Endothelial cell of umbilical vein (primary cell): ENCODE measurements at regions of chr11 and their contacts with region 1.

Region 1: GRCh38 chr11:92941676-92942571 is 27.5 kb upstream of the MTNR1B start:
- DNase-seq: peak; percentile 35
- H3K4me3 ChIP-seq: no peak overlapping the region
- H3K27ac ChIP-seq: no peak overlapping the region
- H3K4me1 ChIP-seq: no peaks in the 10 kb centered on the region
- H3K27me3 ChIP-seq: no peaks in the 10 kb centered on the region
- CTCF ChIP-seq: peak; percentile 58 to 61
- POLR2A ChIP-seq: no peak

Region 2: DNA sequence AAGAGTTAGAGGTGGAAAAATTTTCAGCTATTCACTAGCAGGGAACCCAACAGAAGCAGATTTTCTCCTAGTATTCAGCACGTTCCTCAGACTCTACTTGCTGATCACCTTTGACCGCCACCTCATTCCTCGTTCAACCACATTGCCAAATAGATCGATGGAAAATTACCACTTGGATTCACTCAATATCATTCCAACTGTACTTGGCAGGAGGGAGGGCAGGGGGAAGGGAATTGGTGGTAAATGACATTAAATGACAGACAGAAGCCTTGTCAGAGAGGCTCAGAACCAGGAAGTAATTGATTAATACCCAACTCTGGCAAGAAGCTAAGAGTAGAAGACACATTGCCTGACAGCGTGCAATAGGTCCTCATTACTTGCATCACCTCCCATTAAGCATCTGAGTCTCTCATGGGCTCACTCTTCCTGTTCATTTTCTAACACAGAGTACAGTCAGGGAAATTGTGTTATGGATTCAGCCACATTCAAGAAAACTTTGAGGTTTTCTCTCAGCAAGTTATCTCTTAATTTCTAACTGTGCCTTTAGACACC is 957.8 kb before region 1 on chr11:
- CTCF ChIA-PET with region 1: no interaction called
- POLR2A ChIA-PET with region 1: no interaction called
- dilution Hi-C with region 1: no loop called
- intact Hi-C with region 1: no loop called
- DNase-seq: no peak
- H3K4me3 ChIP-seq: no peak overlapping the region
- H3K27ac ChIP-seq: no peak overlapping the region
- H3K4me1 ChIP-seq: no peaks in the 10 kb centered on the region
- H3K27me3 ChIP-seq: no peaks in the 10 kb centered on the region
- CTCF ChIP-seq: no peak
- POLR2A ChIP-seq: no peak

Region 3: GRCh38 chr11:92804388-92804966 is 137.4 kb before region 1 on chr11:
- CTCF ChIA-PET with region 1: no interaction called
- POLR2A ChIA-PET with region 1: no interaction called
- dilution Hi-C with region 1: no loop called
- intact Hi-C with region 1: no loop called
- DNase-seq: no peak
- H3K4me3 ChIP-seq: no peak overlapping the region
- H3K27ac ChIP-seq: no peak overlapping the region
- H3K4me1 ChIP-seq: no peaks in the 10 kb centered on the region
- H3K27me3 ChIP-seq: no peaks in the 10 kb centered on the region
- CTCF ChIP-seq: no peak
- POLR2A ChIP-seq: no peak

Region 4: DNA sequence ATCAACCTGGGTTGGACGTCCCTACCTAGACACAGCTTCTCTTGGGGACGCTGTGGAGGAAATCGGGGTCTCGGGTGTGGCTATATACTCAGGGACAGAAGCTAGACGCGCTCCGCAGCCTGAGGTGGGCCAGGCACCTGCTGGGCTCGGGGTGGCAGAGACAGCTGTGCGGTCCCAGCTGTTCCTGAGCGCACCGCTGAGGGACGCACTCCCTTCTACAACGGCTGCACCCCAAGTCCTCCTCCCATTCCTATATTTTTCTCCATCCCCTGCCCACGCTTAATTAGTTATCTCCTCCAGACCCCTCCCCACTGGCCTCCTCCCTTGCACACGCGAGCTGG is 27.3 kb after region 1 on chr11:
- CTCF ChIA-PET with region 1: no interaction called
- POLR2A ChIA-PET with region 1: no interaction called
- dilution Hi-C with region 1: no loop called
- intact Hi-C with region 1: no loop called
- DNase-seq: no peak
- H3K4me3 ChIP-seq: no peak overlapping the region
- H3K27ac ChIP-seq: no peak overlapping the region
- H3K4me1 ChIP-seq: no peaks in the 10 kb centered on the region
- H3K27me3 ChIP-seq: peaks cover 0 to 4% of the 10 kb centered on the region in 2 experiments
- CTCF ChIP-seq: no peak
- POLR2A ChIP-seq: no peak

Region 5: GRCh38 chr11:93063100-93063499 is 121.2 kb after region 1 on chr11:
- CTCF ChIA-PET with region 1: interaction called, 28 read pairs
- POLR2A ChIA-PET with region 1: no interaction called
- dilution Hi-C with region 1: no loop called
- intact Hi-C with region 1: loop called (anchors 1 kb)
- DNase-seq: no peak
- H3K4me3 ChIP-seq: no peak overlapping the region
- H3K27ac ChIP-seq: no peak overlapping the region
- H3K4me1 ChIP-seq: no peaks in the 10 kb centered on the region
- H3K27me3 ChIP-seq: no peaks in the 10 kb centered on the region
- CTCF ChIP-seq: no peak
- POLR2A ChIP-seq: no peak

Region 6: GRCh38 chr11:93169950-93170561 is 228.1 kb after region 1 on chr11:
- CTCF ChIA-PET with region 1: interaction called, 7 read pairs
- POLR2A ChIA-PET with region 1: no interaction called
- dilution Hi-C with region 1: no loop called
- intact Hi-C with region 1: loop called (anchors 2 kb)
- DNase-seq: peak; percentile 40
- H3K4me3 ChIP-seq: no peak overlapping the region
- H3K27ac ChIP-seq: no peak overlapping the region
- H3K4me1 ChIP-seq: peaks cover 6% of the 10 kb centered on the region
- H3K27me3 ChIP-seq: no peaks in the 10 kb centered on the region
- CTCF ChIP-seq: peak in 1 of 2 donors; percentile 35
- POLR2A ChIP-seq: no peak

Region 7: GRCh38 chr11:93225662-93226061 is 283.7 kb after region 1 on chr11:
- CTCF ChIA-PET with region 1: interaction called, 136 read pairs
- POLR2A ChIA-PET with region 1: no interaction called
- dilution Hi-C with region 1: no loop called
- intact Hi-C with region 1: loop called (anchors 1 kb)
- DNase-seq: peak; percentile 41
- H3K4me3 ChIP-seq: no peak overlapping the region
- H3K27ac ChIP-seq: no peak overlapping the region
- H3K4me1 ChIP-seq: no peaks in the 10 kb centered on the region
- H3K27me3 ChIP-seq: no peaks in the 10 kb centered on the region
- CTCF ChIP-seq: no peak
- POLR2A ChIP-seq: no peak

Region 8: GRCh38 chr11:93234602-93235207 is 292.8 kb after region 1 on chr11:
- CTCF ChIA-PET with region 1: interaction called, 9 read pairs
- POLR2A ChIA-PET with region 1: no interaction called
- dilution Hi-C with region 1: no loop called
- intact Hi-C with region 1: loop called (anchors 1 kb)
- DNase-seq: peak; percentile 77
- H3K4me3 ChIP-seq: no peak overlapping the region
- H3K27ac ChIP-seq: no peak overlapping the region
- H3K4me1 ChIP-seq: no peaks in the 10 kb centered on the region
- H3K27me3 ChIP-seq: peaks cover 4 to 7% of the 10 kb centered on the region in 2 experiments
- CTCF ChIP-seq: peak; percentile 74 to 85
- POLR2A ChIP-seq: no peak

Region 9: GRCh38 chr11:93248602-93249001 is 306.7 kb after region 1 on chr11:
- CTCF ChIA-PET with region 1: interaction called, 13 read pairs
- POLR2A ChIA-PET with region 1: no interaction called
- dilution Hi-C with region 1: no loop called
- intact Hi-C with region 1: no loop called
- DNase-seq: peak; percentile 15
- H3K4me3 ChIP-seq: no peak overlapping the region
- H3K27ac ChIP-seq: no peak overlapping the region
- H3K4me1 ChIP-seq: no peaks in the 10 kb centered on the region
- H3K27me3 ChIP-seq: no peaks in the 10 kb centered on the region
- CTCF ChIP-seq: peak in 1 of 2 donors; percentile 5
- POLR2A ChIP-seq: no peak

Region 10: DNA sequence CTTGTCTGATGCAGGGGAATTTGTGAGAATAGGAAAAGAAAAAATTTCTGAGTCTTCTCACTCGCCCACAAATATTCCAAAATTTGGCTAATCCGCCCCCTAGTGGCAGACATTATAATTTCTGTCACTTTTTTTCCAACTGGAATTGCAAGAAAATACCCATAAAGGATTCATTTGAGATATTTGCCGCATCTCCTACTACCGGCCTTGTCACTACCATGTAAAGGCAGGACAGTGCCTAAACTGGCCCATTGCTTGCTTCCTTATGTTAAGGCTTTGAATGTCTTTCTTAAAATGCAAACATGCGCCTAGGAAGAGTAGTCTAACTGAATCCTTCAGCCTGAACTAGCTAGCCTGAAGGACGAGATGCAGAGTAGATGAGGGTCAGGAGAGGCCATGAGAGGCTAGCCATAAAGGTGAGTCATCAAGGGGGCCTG is 710.3 kb after region 1 on chr11:
- CTCF ChIA-PET with region 1: interaction called, 6 read pairs
- POLR2A ChIA-PET with region 1: no interaction called
- dilution Hi-C with region 1: no loop called
- intact Hi-C with region 1: loop called (anchors 1 kb)
- DNase-seq: peak; percentile 56
- H3K4me3 ChIP-seq: no peak overlapping the region
- H3K27ac ChIP-seq: no peak overlapping the region
- H3K4me1 ChIP-seq: no peaks in the 10 kb centered on the region
- H3K27me3 ChIP-seq: peaks cover 22 to 24% of the 10 kb centered on the region in 2 experiments
- CTCF ChIP-seq: peak; percentile 51 to 52
- POLR2A ChIP-seq: no peak